Dendritic cell treated with granulocyte-macrophage colony-stimulating factor and Interleukin-4, amounts not matched to agents 40 ng/mL and 50 ng/mL, for 4 days (primary cell): ENCODE measurements at regions of chr14 and their contacts with region 1.

Region 1: DNA sequence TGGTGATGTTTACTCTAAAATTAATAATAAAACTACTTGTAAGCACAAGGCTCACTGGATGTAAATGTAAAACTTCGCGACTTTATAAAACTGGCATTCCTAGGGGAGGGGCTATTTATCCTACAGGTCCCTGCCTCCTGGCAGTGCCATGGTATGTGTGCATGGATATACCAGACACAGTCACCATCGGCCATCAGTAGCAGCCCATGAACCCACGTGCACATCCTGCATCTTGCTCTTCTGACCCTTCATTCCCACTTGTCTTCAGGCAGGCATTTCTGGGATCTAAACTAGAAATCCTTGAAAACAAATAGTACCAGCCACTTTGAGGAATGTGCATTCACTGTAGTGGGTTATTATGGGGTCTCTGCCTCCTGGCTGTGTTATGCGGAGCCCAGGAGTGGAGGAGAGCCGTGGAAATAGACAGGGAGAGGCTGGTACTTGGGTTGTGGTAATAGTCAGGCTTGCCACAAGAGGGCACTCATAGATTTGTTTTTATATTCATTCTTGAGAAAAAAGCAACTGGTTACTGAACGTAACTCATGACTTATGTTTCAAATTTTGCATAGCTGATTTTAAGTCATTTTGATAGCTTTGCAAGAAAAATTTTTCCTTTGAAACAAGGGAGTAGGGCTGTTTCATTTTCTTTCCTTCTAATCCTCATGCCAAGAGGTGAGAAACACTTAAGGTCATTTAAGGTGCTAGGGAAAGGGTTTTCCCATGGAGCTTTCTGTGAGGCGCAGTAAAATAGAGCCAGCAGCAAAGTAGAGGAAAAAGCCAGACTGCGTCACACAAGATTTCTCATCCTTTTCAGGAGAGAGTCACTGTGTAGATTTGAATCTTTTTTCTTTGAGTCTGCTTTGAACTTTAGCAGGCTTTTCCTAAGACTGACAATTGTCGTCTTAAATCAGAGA is 17.4 kb upstream of the GALNT16 start:
- H3K4me3 Mint-ChIP-seq: no peak overlapping the region
- H3K27ac Mint-ChIP-seq: no peak overlapping the region
- H3K4me1 Mint-ChIP-seq: no peaks in the 10 kb centered on the region
- H3K27me3 Mint-ChIP-seq: no peaks in the 10 kb centered on the region

Region 2: DNA sequence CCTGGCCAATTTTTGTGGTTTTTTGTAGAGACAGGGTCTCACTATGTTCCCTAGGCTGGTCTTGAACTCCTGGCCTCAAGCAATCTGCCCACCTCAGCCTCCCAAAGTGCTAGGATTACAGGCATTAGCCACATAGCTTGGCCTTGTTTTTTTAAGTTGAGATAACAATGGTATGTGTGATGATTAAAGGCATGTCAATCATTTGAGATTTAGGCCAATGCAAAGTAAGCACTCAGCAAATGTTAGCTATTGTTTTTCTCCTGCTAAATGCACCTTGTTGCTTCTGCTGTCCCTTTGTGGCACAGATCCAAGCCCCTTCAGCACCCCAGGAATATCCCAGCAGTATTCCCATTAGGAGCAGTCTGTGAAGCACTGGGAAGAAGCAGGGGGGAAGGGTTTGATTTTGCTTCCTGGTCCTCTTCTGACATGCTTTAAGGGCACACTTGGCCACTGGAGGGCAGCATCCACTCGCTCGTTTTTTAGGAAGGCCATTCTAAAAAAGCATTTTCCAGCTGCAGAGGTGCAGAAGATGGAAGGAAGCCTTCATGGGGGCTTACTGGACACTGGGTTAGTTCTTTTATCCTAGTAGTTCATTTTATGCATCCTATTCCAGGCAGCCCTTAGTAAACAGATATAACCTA is 379.5 kb before region 1 on chr14:
- intact Hi-C with region 1: loop called (anchors 10 kb)
- H3K4me3 Mint-ChIP-seq: no peak overlapping the region
- H3K27ac Mint-ChIP-seq: no peak overlapping the region
- H3K4me1 Mint-ChIP-seq: peaks cover 11% of the 10 kb centered on the region
- H3K27me3 Mint-ChIP-seq: no peaks in the 10 kb centered on the region

Region 3: GRCh38 chr14:69299286-69300035 is 56.9 kb after region 1 on chr14:
- intact Hi-C with region 1: no loop called
- H3K4me3 Mint-ChIP-seq: no peak overlapping the region
- H3K27ac Mint-ChIP-seq: no peak overlapping the region
- H3K4me1 Mint-ChIP-seq: no peaks in the 10 kb centered on the region
- H3K27me3 Mint-ChIP-seq: peaks cover 35% of the 10 kb centered on the region

Region 4: GRCh38 chr14:69346710-69347109 is 104.1 kb after region 1 on chr14:
- intact Hi-C with region 1: loop called (anchors 10 kb)
- H3K4me3 Mint-ChIP-seq: no peak overlapping the region
- H3K27ac Mint-ChIP-seq: no peak overlapping the region
- H3K4me1 Mint-ChIP-seq: peaks cover 14% of the 10 kb centered on the region
- H3K27me3 Mint-ChIP-seq: peaks cover 22% of the 10 kb centered on the region

Region 5: GRCh38 chr14:69460093-69460701 is 217.6 kb after region 1 on chr14:
- intact Hi-C with region 1: loop called (anchors 1 kb)
- H3K4me3 Mint-ChIP-seq: no peak overlapping the region
- H3K27ac Mint-ChIP-seq: no peak overlapping the region
- H3K4me1 Mint-ChIP-seq: no peaks in the 10 kb centered on the region
- H3K27me3 Mint-ChIP-seq: no peaks in the 10 kb centered on the region

Region 6: GRCh38 chr14:69574263-69574953 is 331.8 kb after region 1 on chr14 and contains the start of gene CCDC177:
- intact Hi-C with region 1: loop called (anchors 5 kb)
- H3K4me3 Mint-ChIP-seq: no peak within 1 kb of the TSS
- H3K27ac Mint-ChIP-seq: no peak within 1 kb of the TSS
- H3K4me1 Mint-ChIP-seq: peaks cover 12% of the 10 kb centered on the region
- H3K27me3 Mint-ChIP-seq: peaks cover 86% of the 10 kb centered on the region

Region 7: GRCh38 chr14:69780952-69781351 is 538.4 kb after region 1 on chr14:
- intact Hi-C with region 1: no loop called
- H3K4me3 Mint-ChIP-seq: no peak overlapping the region
- H3K27ac Mint-ChIP-seq: no peak overlapping the region
- H3K4me1 Mint-ChIP-seq: peaks cover 23% of the 10 kb centered on the region
- H3K27me3 Mint-ChIP-seq: no peaks in the 10 kb centered on the region